ENCODE measurements at regions of chr17 and their contacts with region 1.

Region 1: DNA sequence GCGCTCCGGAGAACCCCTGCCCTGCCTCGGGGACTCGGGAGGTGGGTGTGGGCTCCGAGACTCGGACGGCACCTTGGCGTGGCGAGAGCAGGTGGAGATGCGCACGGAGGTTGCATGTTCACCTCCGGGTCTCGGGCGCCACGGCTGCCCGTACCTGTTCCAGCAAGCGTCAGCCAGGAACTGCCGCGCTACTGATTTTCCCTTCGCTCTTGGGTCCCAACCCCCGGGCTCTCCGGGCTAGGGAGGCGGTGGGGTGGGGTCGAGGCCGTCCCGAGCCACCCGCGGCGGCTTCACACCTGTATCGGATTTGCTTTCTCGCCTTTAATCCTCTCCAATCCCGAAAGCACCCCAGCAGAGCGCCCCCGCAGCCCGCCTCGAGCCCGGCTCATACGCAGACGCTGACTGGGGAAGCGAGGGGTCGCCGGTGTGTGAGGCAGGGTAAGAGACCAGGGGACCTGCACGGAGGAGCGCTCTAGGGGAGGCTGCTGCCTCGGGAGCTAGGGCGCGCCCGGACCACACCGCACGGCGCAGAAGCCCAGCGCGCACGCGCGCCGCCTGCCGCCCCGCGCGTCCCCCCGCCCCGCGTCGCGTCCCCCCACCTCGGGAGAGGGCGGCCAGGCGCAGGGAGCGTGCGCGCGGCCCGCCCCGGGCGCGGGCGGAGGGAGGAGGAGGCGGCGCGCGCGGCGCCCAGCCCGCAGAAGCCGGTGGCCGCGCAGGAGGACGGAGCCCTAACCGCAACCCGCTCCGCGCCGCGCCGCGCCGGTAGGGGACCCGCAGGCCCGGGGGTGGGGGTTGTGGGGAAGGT is at the start of gene DUSP14:
- DNase-seq: peak; percentile 90 to 94
- H3K4me3 ChIP-seq: peak within 1 kb of the TSS; percentile 65
- H3K4me3 Mint-ChIP-seq: peak within 1 kb of the TSS; percentile 93
- H3K27ac Mint-ChIP-seq: peak within 1 kb of the TSS; percentile 84
- H3K4me1 ChIP-seq: peaks cover 17% of the 10 kb centered on the region
- H3K4me1 Mint-ChIP-seq: peaks cover 38% of the 10 kb centered on the region
- H3K27me3 ChIP-seq: no peaks in the 10 kb centered on the region
- H3K27me3 Mint-ChIP-seq: no peaks in the 10 kb centered on the region
- CTCF ChIP-seq: peak in 1 of 2 experiments; percentile 8
- total RNA-seq, gene DUSP14: 30.4 and 32.5 TPM in 2 replicates

Region 2: GRCh38 chr17:37358830-37359681 is 130.3 kb before region 1 on chr17:
- CTCF ChIA-PET with region 1: no interaction called
- POLR2A ChIA-PET with region 1: no interaction called
- intact Hi-C with region 1: loop called (anchors 5 kb)
- DNase-seq: peak; percentile 98 to 100
- H3K4me3 ChIP-seq: peak overlapping the region; percentile 84
- H3K4me3 Mint-ChIP-seq: peak overlapping the region; percentile 98
- H3K27ac Mint-ChIP-seq: peak overlapping the region; percentile 90
- H3K4me1 ChIP-seq: peaks cover 25% of the 10 kb centered on the region
- H3K4me1 Mint-ChIP-seq: peaks cover 22% of the 10 kb centered on the region
- H3K27me3 ChIP-seq: no peaks in the 10 kb centered on the region
- H3K27me3 Mint-ChIP-seq: no peaks in the 10 kb centered on the region
- CTCF ChIP-seq: peak; percentile 22 to 60

Region 3: DNA sequence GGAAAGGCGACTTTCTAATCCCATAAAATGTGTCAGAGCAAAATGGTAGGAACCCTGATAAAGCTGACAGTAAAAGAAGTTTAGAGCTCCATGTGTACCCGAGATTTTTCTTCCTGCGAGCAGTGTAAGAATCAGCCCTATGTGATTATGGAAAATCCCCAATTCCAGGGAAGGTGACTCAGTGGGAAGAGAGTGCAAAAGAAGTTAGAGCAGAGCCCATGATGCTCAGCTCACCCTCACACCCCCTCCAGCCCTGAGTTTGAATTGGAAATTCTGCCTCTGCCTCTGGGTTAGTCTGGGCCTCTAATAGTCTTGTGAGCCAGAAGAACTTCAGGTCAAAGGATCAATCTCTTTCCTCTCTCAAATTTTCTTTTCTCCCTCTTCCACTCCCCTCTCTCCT is 101.1 kb before region 1 on chr17:
- CTCF ChIA-PET with region 1: no interaction called
- POLR2A ChIA-PET with region 1: no interaction called
- intact Hi-C with region 1: no loop called
- DNase-seq: no peak
- H3K4me3 ChIP-seq: no peak overlapping the region
- H3K4me3 Mint-ChIP-seq: no peak overlapping the region
- H3K27ac Mint-ChIP-seq: no peak overlapping the region
- H3K4me1 ChIP-seq: peaks cover 9% of the 10 kb centered on the region
- H3K4me1 Mint-ChIP-seq: peaks cover 6% of the 10 kb centered on the region
- H3K27me3 ChIP-seq: no peaks in the 10 kb centered on the region
- H3K27me3 Mint-ChIP-seq: no peaks in the 10 kb centered on the region
- CTCF ChIP-seq: no peak

Region 4: GRCh38 chr17:37406635-37407461 is 82.6 kb before region 1 on chr17 and contains the starts of genes ACACA and TADA2A:
- CTCF ChIA-PET with region 1: no interaction called
- POLR2A ChIA-PET with region 1: interaction called, 6 read pairs
- intact Hi-C with region 1: loop called (anchors 2 kb)
- DNase-seq: peak; percentile 86 to 92
- H3K4me3 ChIP-seq: peak within 1 kb of the TSS; percentile 99
- H3K4me3 Mint-ChIP-seq: peak within 1 kb of the TSS; percentile 93
- H3K27ac Mint-ChIP-seq: peak within 1 kb of the TSS; percentile 87
- H3K4me1 ChIP-seq: peaks cover 14% of the 10 kb centered on the region; the same call in 1 of the 2 replicates
- H3K4me1 Mint-ChIP-seq: peaks cover 10% of the 10 kb centered on the region
- H3K27me3 ChIP-seq: no peaks in the 10 kb centered on the region
- H3K27me3 Mint-ChIP-seq: no peaks in the 10 kb centered on the region
- CTCF ChIP-seq: no peak
- total RNA-seq, gene ACACA: 108 and 113 TPM in 2 replicates
- total RNA-seq, gene TADA2A: 27.3 and 29.4 TPM in 2 replicates

Region 5: GRCh38 chr17:37450112-37450511 is 39.3 kb before region 1 on chr17:
- CTCF ChIA-PET with region 1: no interaction called
- POLR2A ChIA-PET with region 1: interaction called, 5 read pairs
- intact Hi-C with region 1: loop called (anchors 2 kb)
- DNase-seq: no peak
- H3K4me3 ChIP-seq: no peak overlapping the region
- H3K4me3 Mint-ChIP-seq: no peak overlapping the region
- H3K27ac Mint-ChIP-seq: peak overlapping the region; percentile 46
- H3K4me1 ChIP-seq: peaks cover 17% of the 10 kb centered on the region
- H3K4me1 Mint-ChIP-seq: peaks cover 10% of the 10 kb centered on the region
- H3K27me3 ChIP-seq: no peaks in the 10 kb centered on the region
- H3K27me3 Mint-ChIP-seq: no peaks in the 10 kb centered on the region
- CTCF ChIP-seq: no peak

Region 6: DNA sequence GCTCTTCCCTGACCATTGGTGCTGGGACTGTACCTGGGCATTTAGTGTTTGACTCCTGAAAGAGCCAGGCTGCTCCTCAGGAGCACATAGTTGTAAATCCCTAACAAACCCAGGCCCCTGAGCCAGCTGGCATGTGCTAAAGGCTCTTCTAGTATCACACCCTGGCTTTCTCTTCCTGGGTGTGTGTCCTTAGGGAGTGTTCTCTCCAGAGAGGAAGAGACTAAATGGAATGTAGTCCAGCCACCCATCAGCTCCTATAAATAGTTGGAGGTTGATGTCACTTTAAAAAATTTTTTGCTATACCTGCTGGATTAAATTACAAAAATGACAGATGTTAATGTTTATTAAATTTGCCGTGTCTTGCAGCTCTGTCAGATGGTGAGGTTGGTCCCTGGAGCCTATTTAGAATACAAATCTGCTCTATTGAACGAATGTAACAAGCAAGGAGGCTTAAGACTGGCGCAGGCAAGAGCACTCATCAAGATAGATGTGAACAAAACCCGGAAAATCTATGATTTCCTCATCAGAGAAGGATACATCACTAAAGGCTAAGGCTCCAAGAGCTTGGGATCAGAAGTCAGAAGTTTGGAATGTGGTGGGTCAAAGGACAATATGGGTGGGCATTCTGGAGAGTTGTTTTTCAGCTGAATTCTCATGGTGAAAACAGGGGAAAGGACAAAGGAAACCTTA is 12.8 kb before region 1 on chr17:
- CTCF ChIA-PET with region 1: no interaction called
- POLR2A ChIA-PET with region 1: interaction called, 5 read pairs
- intact Hi-C with region 1: loop called (anchors 1 kb)
- DNase-seq: peak; percentile 59 to 76
- H3K4me3 ChIP-seq: no peak overlapping the region
- H3K4me3 Mint-ChIP-seq: peak overlapping the region; percentile 42
- H3K27ac Mint-ChIP-seq: peak overlapping the region; percentile 90
- H3K4me1 ChIP-seq: peaks cover 25% of the 10 kb centered on the region
- H3K4me1 Mint-ChIP-seq: peaks cover 43% of the 10 kb centered on the region
- H3K27me3 ChIP-seq: no peaks in the 10 kb centered on the region
- H3K27me3 Mint-ChIP-seq: no peaks in the 10 kb centered on the region
- CTCF ChIP-seq: no peak

Region 7: DNA sequence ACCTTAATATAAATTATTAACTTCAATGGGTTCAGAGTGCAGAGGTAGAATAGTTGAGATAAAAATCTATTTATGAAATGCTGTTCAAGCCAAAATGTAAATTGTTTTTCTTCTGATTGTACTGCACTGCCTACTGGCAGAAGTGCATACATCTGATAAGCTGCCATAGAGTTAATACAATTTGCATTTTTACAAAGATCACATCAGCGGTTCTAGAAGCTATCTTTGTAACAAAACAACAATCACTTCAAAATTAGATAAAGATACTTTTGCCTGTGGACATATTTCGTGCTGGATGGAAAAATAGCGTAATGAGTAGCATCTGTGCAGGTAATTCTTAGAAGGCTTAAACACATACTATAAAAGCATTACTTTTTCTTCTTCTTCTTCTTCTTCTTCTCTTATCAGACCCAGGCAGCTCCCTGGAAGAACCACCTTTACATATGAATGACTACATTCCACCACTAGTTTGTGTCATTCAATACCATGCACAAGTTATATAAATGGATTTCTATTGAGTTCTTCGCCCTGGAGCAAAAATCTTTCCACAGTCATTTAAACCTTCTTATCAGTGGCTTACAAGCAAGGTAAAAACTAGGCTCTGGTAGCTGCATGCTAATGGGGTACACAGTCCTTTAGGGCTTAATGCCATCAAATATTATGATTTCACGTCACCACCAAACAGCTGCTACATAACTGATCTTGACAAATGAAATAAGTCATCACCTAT is 72.8 kb after region 1 on chr17:
- CTCF ChIA-PET with region 1: no interaction called
- POLR2A ChIA-PET with region 1: no interaction called
- intact Hi-C with region 1: no loop called
- DNase-seq: peak in 1 of 2 experiments; percentile 21
- H3K4me3 ChIP-seq: no peak overlapping the region
- H3K4me3 Mint-ChIP-seq: no peak overlapping the region
- H3K27ac Mint-ChIP-seq: no peak overlapping the region
- H3K4me1 ChIP-seq: 0 out of 2 replicates have a peak, but pooled peaks cover 4% of the 10 kb centered on the region
- H3K4me1 Mint-ChIP-seq: peaks cover 10% of the 10 kb centered on the region
- H3K27me3 ChIP-seq: no peaks in the 10 kb centered on the region
- H3K27me3 Mint-ChIP-seq: no peaks in the 10 kb centered on the region
- CTCF ChIP-seq: no peak

Region 8: GRCh38 chr17:37585066-37585465 is 95.7 kb after region 1 on chr17:
- CTCF ChIA-PET with region 1: no interaction called
- POLR2A ChIA-PET with region 1: no interaction called
- intact Hi-C with region 1: no loop called
- DNase-seq: no peak
- H3K4me3 ChIP-seq: no peak overlapping the region
- H3K4me3 Mint-ChIP-seq: no peak overlapping the region
- H3K27ac Mint-ChIP-seq: no peak overlapping the region
- H3K4me1 ChIP-seq: no peaks in the 10 kb centered on the region
- H3K4me1 Mint-ChIP-seq: no peaks in the 10 kb centered on the region
- H3K27me3 ChIP-seq: no peaks in the 10 kb centered on the region
- H3K27me3 Mint-ChIP-seq: no peaks in the 10 kb centered on the region
- CTCF ChIP-seq: no peak